ENCODE measurements at regions of chr17 and their contacts with region 1.

Region 1: DNA sequence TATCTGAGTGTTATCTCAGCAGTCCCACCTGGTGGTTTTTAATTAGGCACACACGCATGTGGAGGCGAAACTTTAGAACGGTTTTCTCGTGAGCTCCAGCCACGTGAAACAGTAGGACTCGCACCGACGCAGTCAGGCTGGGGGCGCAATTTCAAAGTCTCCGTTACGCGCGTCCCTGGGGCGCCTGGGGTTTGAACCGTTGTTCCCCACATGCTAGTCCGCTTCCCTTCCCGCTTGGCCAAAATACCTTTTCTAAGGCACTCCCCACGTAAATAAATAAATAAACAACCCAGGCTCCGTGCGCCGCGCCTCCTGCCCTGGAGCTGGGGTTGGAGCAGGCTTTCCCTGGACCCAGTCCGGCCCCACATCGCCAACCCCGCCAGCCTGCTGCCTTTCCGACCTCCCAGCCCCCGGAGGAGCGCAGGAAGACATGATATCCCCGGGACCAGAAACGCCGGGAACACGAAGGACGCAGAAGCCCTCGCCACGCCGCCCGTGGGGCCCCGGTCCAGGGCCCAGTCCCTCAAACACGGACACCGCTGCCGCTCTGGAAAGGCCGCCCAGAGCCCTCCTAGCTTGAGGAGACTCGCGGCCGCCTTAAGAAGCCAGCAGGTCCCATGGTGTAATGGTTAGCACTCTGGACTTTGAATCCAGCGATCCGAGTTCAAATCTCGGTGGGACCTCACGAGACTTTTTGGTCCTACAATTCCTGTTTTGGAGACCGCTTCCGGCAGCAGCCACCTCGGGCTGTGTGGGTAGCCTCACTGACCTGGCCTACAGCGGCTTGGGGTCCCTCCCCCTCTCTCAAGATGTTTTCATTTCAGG is 18.2 kb downstream of the GNGT2 start:
- DNase-seq: peak; percentile 98
- H3K4me3 Mint-ChIP-seq: peak overlapping the region; percentile 95
- H3K27ac Mint-ChIP-seq: peak overlapping the region; percentile 99
- H3K4me1 Mint-ChIP-seq: peaks cover 48% of the 10 kb centered on the region
- H3K27me3 Mint-ChIP-seq: no peaks in the 10 kb centered on the region

Region 2: GRCh38 chr17:48908047-48908843 is 283.9 kb before region 1 on chr17 and contains the start of gene UBE2Z:
- intact Hi-C with region 1: loop called (anchors 2 kb)
- DNase-seq: peak; percentile 95
- H3K4me3 Mint-ChIP-seq: peak within 1 kb of the TSS; percentile 96
- H3K27ac Mint-ChIP-seq: peak within 1 kb of the TSS; percentile 98
- H3K4me1 Mint-ChIP-seq: peaks cover 39% of the 10 kb centered on the region
- H3K27me3 Mint-ChIP-seq: no peaks in the 10 kb centered on the region
- total RNA-seq, gene UBE2Z: 89.3 and 91.4 TPM in 2 replicates

Region 3: DNA sequence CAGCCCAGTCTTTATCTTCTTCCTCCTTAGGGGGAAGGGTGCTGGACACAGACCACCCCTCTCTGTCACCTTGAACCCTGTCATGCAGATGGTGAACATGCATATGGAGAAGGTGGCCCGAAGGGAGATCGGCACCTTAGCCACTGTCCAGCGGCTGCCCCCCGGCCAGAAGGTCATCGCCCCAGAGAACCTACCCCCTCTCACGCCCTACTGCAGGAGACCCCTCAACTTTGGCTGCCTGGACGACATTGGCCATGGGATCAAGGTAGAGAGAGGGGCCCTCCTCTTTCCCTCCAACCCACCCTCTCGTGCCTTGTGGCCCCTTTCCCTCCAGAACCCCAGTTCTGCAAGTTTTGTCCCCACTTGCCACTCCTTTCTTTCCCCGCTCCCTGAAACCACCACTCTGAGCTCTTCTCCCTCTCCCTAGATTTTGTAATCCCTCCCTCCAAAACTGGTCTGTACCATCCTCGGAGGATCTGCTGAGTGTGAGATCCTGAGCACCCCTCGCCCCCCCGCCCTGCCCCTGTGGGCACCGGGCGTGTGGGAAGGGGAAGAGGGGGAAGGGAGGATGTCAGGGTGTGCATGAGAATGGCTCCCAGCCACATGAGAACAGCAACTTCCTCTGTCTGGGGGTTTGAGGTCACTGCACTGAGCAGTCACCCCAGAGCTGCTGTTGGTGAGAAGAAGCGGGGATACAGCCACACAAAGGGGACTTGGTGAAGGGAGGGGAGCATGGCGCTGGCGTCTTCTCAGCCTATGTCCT is 25.7 kb after region 1 on chr17:
- intact Hi-C with region 1: loop called (anchors 1 kb)
- DNase-seq: peak; percentile 91
- H3K4me3 Mint-ChIP-seq: peak overlapping the region; percentile 80
- H3K27ac Mint-ChIP-seq: peak overlapping the region; percentile 87
- H3K4me1 Mint-ChIP-seq: peaks cover 55% of the 10 kb centered on the region
- H3K27me3 Mint-ChIP-seq: no peaks in the 10 kb centered on the region

Region 4: GRCh38 chr17:49343273-49343672 is 151.1 kb after region 1 on chr17:
- intact Hi-C with region 1: loop called (anchors 5 kb)
- DNase-seq: peak; percentile 73
- H3K4me3 Mint-ChIP-seq: peak overlapping the region; percentile 89
- H3K27ac Mint-ChIP-seq: peak overlapping the region; percentile 94
- H3K4me1 Mint-ChIP-seq: peaks cover 48% of the 10 kb centered on the region
- H3K27me3 Mint-ChIP-seq: peaks cover 7% of the 10 kb centered on the region

Region 5: GRCh38 chr17:49788478-49789242 is 596.5 kb after region 1 on chr17 and contains the start of gene KAT7:
- intact Hi-C with region 1: loop called (anchors 2 kb)
- DNase-seq: peak; percentile 99
- H3K4me3 Mint-ChIP-seq: peak within 1 kb of the TSS; percentile 89
- H3K27ac Mint-ChIP-seq: peak within 1 kb of the TSS; percentile 93
- H3K4me1 Mint-ChIP-seq: peaks cover 36% of the 10 kb centered on the region
- H3K27me3 Mint-ChIP-seq: no peaks in the 10 kb centered on the region
- total RNA-seq, gene KAT7: 67.2 and 75.2 TPM in 2 replicates

Measured in activated CD4-positive, alpha-beta T cell treated with anti-CD3 and anti-CD28 coated beads, Interleukin-2, amount 10 ng/mL, durations not matched to agents 24 days and 14 days (primary cell).